ENCODE measurements at regions of chr6 and their contacts with region 1.

Region 1: DNA sequence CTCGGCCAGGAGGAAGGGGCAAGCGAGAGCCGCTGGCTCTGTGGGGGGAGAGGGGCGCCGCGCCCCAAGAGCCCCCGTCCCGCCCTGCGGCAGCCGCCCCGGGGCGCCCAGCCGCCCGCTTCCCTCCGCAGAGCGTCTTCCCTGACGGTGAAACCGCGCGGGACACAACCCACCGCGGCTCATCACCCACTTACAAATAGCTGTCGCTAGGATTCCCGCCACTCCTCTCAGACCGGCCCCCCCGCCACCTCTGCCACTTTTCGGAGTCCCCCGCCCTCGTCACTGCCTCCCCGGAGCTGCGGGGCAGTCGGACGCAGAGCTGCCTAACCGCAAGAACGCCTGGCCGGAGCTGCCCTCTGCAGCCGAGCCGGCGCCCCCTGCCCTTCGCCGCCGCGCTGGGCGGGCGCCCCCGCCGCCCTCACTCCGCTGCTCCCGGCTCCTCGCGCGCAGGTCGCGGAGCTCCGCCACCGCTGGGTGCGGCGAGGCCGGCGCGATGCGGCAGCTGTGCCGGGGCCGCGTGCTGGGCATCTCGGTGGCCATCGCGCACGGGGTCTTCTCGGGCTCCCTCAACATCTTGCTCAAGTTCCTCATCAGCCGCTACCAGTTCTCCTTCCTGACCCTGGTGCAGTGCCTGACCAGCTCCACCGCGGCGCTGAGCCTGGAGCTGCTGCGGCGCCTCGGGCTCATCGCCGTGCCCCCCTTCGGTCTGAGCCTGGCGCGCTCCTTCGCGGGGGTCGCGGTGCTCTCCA is at the start of gene SLC35D3:
- DNase-seq: peak; percentile 14
- H3K4me3 ChIP-seq: peak within 1 kb of the TSS; percentile 50
- H3K27ac ChIP-seq: no peak within 1 kb of the TSS
- H3K4me1 ChIP-seq: peaks cover 29% of the 10 kb centered on the region
- H3K27me3 ChIP-seq: peaks cover 54% of the 10 kb centered on the region
- CTCF ChIP-seq: no peak
- total RNA-seq, gene SLC35D3: not detected in 2 replicates

Region 2: DNA sequence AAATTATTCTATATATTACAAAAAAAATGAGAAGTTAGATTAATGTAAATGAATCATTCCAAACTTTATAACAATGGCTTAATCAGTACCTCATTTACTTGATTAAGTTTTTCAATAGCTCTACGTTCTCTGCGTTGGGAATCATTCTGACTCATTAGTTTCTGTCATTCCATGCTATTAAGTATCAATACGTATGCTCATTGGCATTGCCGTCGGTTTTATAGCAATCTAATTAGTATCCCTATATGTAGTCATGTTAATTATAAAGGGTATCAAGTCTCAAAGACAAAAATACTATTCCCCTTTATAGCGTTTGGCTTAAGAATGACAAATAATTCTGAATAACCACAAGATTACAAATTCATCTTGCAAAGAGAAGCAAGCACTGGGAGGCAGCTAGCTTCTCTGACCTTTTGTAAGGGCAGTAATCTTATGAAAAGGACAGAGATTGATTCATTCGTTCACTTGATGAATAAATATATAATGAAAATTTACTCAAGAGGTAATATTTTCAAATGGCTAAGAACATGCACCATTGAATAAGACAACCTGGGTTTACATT is 530.3 kb after region 1 on chr6:
- CTCF ChIA-PET with region 1: no interaction called
- POLR2A ChIA-PET with region 1: interaction called, 16 read pairs
- intact Hi-C with region 1: no loop called
- DNase-seq: no peak
- H3K4me3 ChIP-seq: no peak overlapping the region
- H3K27ac ChIP-seq: no peak overlapping the region
- H3K4me1 ChIP-seq: no peaks in the 10 kb centered on the region
- H3K27me3 ChIP-seq: no peaks in the 10 kb centered on the region
- CTCF ChIP-seq: no peak

Measured in A673 (cell line).